Endothelial cell of umbilical vein (primary cell): ENCODE measurements at regions of chr3 and their contacts with region 1.

Region 1: GRCh38 chr3:88113311-88114162 is 36.2 kb upstream of the C3orf38 start:
- DNase-seq: peak; percentile 84
- H3K4me3 ChIP-seq: no peak overlapping the region
- H3K27ac ChIP-seq: peak overlapping the region; percentile 3
- H3K4me1 ChIP-seq: no peaks in the 10 kb centered on the region
- H3K27me3 ChIP-seq: no peaks in the 10 kb centered on the region
- CTCF ChIP-seq: peak; percentile 59 to 62
- POLR2A ChIP-seq: no peak

Region 2: DNA sequence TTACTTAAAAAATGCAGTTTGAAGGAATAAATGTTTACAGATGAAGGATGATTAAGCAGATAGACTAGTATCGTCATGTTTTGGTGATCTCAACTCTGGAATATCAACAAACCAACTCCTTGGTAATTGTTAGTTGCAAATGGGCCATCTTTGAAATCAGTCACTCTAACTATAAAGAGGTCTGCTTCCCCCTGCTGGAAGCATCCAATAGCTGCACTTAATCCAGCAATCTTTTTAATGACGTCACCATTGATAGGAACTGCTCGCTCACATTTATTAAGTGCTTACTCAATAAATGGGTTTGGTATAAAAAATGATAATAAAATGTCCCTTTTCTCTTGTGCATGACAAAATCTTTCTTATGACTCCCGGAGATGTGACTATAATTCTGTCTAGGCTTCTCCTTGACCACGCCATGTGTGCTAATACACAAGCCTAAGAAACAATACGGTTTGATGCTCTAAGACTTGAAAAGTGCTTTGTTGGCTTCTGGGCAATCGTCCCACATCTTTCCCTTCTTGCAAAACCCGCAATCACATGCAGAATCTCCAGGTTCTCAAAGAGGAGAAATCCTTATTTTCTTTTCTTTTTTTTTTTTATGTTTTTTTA is 609.5 kb before region 1 on chr3:
- CTCF ChIA-PET with region 1: no interaction called
- POLR2A ChIA-PET with region 1: no interaction called
- dilution Hi-C with region 1: no loop called
- intact Hi-C with region 1: loop called (anchors 2 kb)
- DNase-seq: peak; percentile 85
- H3K4me3 ChIP-seq: no peak overlapping the region
- H3K27ac ChIP-seq: no peak overlapping the region
- H3K4me1 ChIP-seq: no peaks in the 10 kb centered on the region
- H3K27me3 ChIP-seq: peaks cover 0 to 2% of the 10 kb centered on the region in 2 experiments
- CTCF ChIP-seq: peak; percentile 66 to 67
- POLR2A ChIP-seq: no peak

Region 3: GRCh38 chr3:87900061-87900460 is 213.5 kb before region 1 on chr3:
- CTCF ChIA-PET with region 1: interaction called, 5 read pairs
- POLR2A ChIA-PET with region 1: no interaction called
- dilution Hi-C with region 1: no loop called
- intact Hi-C with region 1: loop called (anchors 5 kb)
- DNase-seq: peak; percentile 8
- H3K4me3 ChIP-seq: no peak overlapping the region
- H3K27ac ChIP-seq: no peak overlapping the region
- H3K4me1 ChIP-seq: no peaks in the 10 kb centered on the region
- H3K27me3 ChIP-seq: peaks cover 2 to 3% of the 10 kb centered on the region in 2 experiments
- CTCF ChIP-seq: peak in 1 of 2 donors; percentile 9
- POLR2A ChIP-seq: no peak

Region 4: GRCh38 chr3:88058591-88059368 is 54.8 kb before region 1 on chr3 and contains the starts of genes CGGBP1 and ZNF654:
- CTCF ChIA-PET with region 1: interaction called, 14 read pairs
- POLR2A ChIA-PET with region 1: no interaction called
- dilution Hi-C with region 1: no loop called
- intact Hi-C with region 1: loop called (anchors 1 kb)
- DNase-seq: peak; percentile 99
- H3K4me3 ChIP-seq: peak within 1 kb of the TSS; percentile 77 to 99 (median 98)
- H3K27ac ChIP-seq: peak within 1 kb of the TSS; percentile 94
- H3K4me1 ChIP-seq: peaks cover 29% of the 10 kb centered on the region
- H3K27me3 ChIP-seq: no peaks in the 10 kb centered on the region
- CTCF ChIP-seq: no peak
- POLR2A ChIP-seq: peak; percentile 79
- total RNA-seq, gene CGGBP1: 69.4 and 69.7 TPM in 2 replicates
- total RNA-seq, gene ZNF654: 14.6 and 14.8 TPM in 2 replicates

Region 5: GRCh38 chr3:88131695-88132094 is 18.2 kb after region 1 on chr3:
- CTCF ChIA-PET with region 1: interaction called, 16 read pairs
- POLR2A ChIA-PET with region 1: no interaction called
- dilution Hi-C with region 1: no loop called
- intact Hi-C with region 1: no loop called
- DNase-seq: no peak
- H3K4me3 ChIP-seq: no peak overlapping the region
- H3K27ac ChIP-seq: no peak overlapping the region
- H3K4me1 ChIP-seq: no peaks in the 10 kb centered on the region
- H3K27me3 ChIP-seq: no peaks in the 10 kb centered on the region
- CTCF ChIP-seq: no peak
- POLR2A ChIP-seq: no peak

Region 6: GRCh38 chr3:88149509-88150362 is 36.2 kb after region 1 on chr3 and contains the start of gene C3orf38:
- CTCF ChIA-PET with region 1: interaction called, 12 read pairs
- POLR2A ChIA-PET with region 1: no interaction called
- dilution Hi-C with region 1: no loop called
- intact Hi-C with region 1: no loop called
- DNase-seq: peak; percentile 82
- H3K4me3 ChIP-seq: peak within 1 kb of the TSS; percentile 92 to 100 (median 96)
- H3K27ac ChIP-seq: peak within 1 kb of the TSS; percentile 32
- H3K4me1 ChIP-seq: peaks cover 13% of the 10 kb centered on the region
- H3K27me3 ChIP-seq: no peaks in the 10 kb centered on the region
- CTCF ChIP-seq: no peak
- POLR2A ChIP-seq: peak; percentile 83
- total RNA-seq, gene C3orf38: 17.3 and 17.9 TPM in 2 replicates